Activated CD4-positive, alpha-beta memory T cell treated with anti-CD3 and anti-CD28 coated beads for 36 hours (primary cell): ENCODE measurements at regions of chr7 and their contacts with region 1.

Region 1: DNA sequence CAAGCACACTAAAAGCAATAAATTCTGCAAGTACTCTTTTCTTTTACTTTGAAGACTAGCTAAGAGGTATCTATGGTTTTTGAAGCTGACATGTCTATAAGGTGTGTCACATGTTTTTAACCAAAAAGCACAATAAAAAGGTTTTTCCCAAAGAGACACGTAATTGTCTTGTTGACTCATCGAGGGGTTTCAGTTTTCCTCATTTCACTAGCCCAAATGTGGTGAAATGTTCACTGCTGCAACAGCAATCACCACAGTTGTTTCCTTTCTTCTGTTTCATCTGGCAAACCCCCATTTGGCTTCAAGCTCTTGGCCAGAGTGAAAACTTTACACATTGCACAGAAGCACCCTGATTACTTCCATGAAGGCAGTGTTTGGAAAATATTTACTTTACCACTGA is 3.8 kb upstream of the HOXA4 start:
- DNase-seq: no peak
- H3K4me3 Mint-ChIP-seq: peak overlapping the region; percentile 12
- H3K27ac Mint-ChIP-seq: peak overlapping the region; percentile 38
- H3K4me1 Mint-ChIP-seq: peaks cover 17% of the 10 kb centered on the region
- H3K27me3 Mint-ChIP-seq: peaks cover 60% of the 10 kb centered on the region

Region 2: GRCh38 chr7:26603631-26604030 is 530.8 kb before region 1 on chr7:
- CTCF ChIA-PET with region 1: no interaction called
- POLR2A ChIA-PET with region 1: no interaction called
- intact Hi-C with region 1: no loop called
- DNase-seq: no peak
- H3K4me3 Mint-ChIP-seq: no peak overlapping the region
- H3K27ac Mint-ChIP-seq: no peak overlapping the region
- H3K4me1 Mint-ChIP-seq: no peaks in the 10 kb centered on the region
- H3K27me3 Mint-ChIP-seq: peaks cover 12% of the 10 kb centered on the region

Region 3: DNA sequence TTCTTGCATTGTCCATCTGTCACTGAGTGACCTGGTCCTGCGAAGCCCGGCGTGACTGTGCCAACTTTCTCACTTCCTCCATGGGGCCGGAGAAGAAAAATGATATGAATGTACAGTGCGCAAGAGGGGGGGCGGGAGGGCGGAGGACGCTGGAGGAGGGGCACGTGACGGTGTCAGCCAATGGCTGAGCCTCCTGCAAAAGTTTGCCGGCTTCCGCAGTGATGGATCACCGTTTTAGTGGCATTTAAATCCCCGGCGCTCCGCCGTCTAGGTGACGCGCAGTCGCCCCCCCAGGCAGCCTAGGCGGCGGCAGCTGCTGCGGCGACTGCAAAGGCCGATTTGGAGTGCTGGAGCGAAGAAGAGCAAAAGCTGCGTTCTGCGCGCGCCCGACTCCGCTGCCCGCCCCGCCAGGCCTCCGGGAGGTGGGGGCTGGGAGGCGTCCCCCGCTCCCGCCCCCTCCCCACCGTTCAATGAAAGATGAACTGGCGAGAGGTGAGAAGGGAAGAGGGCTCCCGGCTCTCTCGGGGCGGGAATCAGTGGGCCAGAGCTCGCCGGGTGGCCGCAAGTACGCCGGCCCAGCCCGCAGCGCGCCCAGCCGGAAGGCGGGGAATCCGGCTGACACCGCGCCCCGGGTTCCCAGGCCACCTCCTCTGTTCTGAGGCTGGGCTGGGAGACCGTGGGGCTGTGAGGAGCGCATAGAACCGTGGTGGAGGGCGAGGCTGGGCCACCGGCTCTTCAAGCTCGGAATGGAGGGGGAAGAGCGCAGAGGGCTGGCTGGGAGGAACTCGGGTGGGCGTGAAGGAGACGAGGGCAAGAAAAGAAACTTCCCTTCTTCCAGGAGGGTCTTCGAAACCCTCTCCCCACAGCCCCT is 38.3 kb before region 1 on chr7 and contains the start of gene HOXA1:
- CTCF ChIA-PET with region 1: no interaction called
- POLR2A ChIA-PET with region 1: no interaction called
- intact Hi-C with region 1: loop called (anchors 1 kb)
- DNase-seq: peak; percentile 85
- H3K4me3 Mint-ChIP-seq: peak within 1 kb of the TSS; percentile 66
- H3K27ac Mint-ChIP-seq: no peak within 1 kb of the TSS
- H3K4me1 Mint-ChIP-seq: peaks cover 15% of the 10 kb centered on the region
- H3K27me3 Mint-ChIP-seq: peaks cover 62% of the 10 kb centered on the region
- total RNA-seq, gene HOXA1: 0.29 to 0.43 TPM